Thyroid gland (tissue), 4 donors: ENCODE measurements at regions of chr11 and their contacts with region 1.

Region 1: DNA sequence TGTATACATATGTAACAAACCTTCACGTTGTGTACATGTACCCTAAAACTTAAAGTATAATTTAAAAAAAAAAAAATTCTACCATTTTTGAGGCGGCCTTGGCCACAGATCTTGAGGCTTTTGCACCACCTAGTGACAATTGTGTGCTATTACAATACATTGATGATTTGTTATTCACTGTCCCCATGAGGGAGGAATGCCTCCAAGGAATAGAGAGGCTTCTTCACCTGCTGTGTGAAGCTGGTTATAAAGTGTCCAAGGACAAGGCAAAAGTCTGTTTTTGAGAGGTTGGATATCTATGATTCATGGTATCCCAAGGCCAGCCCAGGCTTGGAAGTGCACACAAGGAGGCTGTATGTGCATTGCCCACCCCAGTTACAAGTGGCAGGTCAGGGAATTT is 30.7 kb downstream of the SLC22A25 start:
- DNase-seq: no peak
- H3K4me3 ChIP-seq: no peak overlapping the region
- H3K27ac ChIP-seq: no peak overlapping the region
- H3K4me1 ChIP-seq: no peaks in the 10 kb centered on the region
- H3K27me3 ChIP-seq: no peaks in the 10 kb centered on the region
- CTCF ChIP-seq: peak in 5 of 6 experiments; percentile 9 to 55 (median 45)
- POLR2A ChIP-seq: no peak

Region 2: DNA sequence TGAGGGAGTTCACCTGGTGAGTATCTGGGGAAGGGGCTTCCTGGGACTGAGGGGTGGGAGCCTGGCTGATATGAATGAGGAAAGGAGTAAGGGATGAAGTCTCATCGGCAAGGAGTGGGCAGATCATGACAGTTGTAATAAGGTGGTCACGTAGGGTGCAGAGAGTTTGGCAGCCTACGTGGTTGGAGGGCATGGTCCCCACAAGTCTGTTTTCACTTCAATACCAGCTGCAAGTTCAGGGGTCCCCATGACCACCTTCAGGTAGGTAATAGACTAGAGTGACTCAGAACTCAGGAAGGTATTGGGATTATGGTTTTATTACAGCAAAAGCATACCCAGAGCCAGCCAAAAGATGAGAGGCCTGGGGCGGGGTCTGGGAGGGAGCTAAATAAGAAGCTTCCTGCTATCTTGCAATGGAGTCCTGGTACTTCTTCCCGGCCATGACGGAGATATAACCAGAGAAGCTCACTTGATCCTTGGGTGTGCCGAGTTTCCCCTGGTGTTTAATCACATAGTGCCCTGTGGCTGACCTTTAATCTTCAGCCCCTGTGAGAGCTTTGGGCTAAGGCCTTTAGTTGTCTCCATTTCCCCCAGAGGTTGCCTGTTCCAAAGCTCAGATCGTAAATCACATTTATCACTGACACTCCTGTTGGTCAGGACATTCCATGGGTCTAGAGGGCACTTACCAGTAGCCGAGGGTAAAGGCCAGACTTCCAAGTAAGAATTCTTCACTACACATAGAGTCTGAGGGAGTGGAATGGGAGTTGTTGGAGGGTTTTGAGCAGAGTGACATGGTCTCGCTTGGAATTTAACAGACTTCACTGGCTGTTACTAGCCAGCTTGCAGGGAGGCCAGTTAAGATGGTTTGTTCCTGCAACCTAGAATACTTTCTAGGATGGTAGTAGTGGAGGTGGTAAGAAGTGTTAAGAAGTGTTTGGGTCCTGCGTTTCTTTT is 323.0 kb before region 1 on chr11:
- intact Hi-C with region 1: no loop called
- DNase-seq: no peak
- H3K4me3 ChIP-seq: no peak overlapping the region
- H3K27ac ChIP-seq: peak overlapping the region in 1 of 3 donors; percentile 17
- H3K4me1 ChIP-seq: peaks cover 0 to 17% of the 10 kb centered on the region in 2 donors
- H3K27me3 ChIP-seq: no peaks in the 10 kb centered on the region
- CTCF ChIP-seq: no peak
- POLR2A ChIP-seq: no peak

Region 3: DNA sequence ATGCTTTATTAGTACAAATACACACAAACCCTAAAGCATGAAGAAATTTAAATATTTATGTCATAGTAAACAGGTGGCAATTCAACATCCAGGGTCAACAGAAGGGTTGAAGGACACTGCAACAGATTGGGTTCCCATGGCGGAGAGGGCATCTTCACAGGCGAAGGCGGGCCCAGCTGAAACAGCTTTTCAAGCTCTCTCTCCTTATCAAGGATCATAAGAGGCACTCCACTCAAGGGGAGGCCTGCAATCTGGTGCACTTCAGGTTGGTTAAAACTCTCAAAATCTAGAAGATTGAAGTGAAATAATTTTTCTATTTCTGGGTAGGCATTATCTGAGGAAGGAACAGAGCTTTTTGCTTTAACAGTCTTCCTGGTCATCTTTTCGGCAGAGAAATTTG is 180.3 kb before region 1 on chr11:
- intact Hi-C with region 1: loop called (anchors 10 kb)
- DNase-seq: no peak
- H3K4me3 ChIP-seq: no peak overlapping the region
- H3K27ac ChIP-seq: no peak overlapping the region
- H3K4me1 ChIP-seq: no peaks in the 10 kb centered on the region
- H3K27me3 ChIP-seq: no peaks in the 10 kb centered on the region
- CTCF ChIP-seq: no peak
- POLR2A ChIP-seq: no peak

Region 4: DNA sequence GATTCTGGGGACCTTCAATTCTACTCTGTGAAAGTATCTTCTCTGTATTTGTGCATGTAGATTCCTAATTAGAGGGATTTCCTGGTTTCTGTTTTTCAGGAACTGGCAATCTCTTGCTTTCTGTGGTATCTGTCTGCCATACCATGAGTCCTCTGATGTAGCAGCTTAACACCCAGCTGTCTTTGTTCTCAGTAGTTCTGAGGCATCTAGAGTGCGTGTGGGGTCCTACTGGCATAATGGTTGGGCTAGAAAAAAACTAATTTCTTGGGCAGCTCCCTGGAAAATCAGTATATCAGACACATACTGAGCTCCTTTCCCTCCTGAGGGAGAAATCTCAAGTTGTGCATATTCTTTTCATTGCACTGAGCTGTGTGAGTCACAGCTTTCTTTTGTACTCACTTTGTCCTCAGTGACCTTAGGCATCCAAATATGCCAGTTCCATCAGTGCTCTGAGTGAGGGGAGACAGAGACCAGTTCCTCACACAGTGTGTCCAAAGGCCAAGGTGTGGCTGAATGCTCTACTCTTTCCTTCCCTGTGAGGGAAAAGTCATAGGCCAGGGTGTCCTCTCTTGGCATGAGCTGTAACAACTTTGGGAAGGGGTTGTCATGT is 33.2 kb before region 1 on chr11:
- intact Hi-C with region 1: no loop called
- DNase-seq: no peak
- H3K4me3 ChIP-seq: no peak overlapping the region
- H3K27ac ChIP-seq: no peak overlapping the region
- H3K4me1 ChIP-seq: no peaks in the 10 kb centered on the region
- H3K27me3 ChIP-seq: no peaks in the 10 kb centered on the region
- CTCF ChIP-seq: no peak
- POLR2A ChIP-seq: no peak

Region 5: DNA sequence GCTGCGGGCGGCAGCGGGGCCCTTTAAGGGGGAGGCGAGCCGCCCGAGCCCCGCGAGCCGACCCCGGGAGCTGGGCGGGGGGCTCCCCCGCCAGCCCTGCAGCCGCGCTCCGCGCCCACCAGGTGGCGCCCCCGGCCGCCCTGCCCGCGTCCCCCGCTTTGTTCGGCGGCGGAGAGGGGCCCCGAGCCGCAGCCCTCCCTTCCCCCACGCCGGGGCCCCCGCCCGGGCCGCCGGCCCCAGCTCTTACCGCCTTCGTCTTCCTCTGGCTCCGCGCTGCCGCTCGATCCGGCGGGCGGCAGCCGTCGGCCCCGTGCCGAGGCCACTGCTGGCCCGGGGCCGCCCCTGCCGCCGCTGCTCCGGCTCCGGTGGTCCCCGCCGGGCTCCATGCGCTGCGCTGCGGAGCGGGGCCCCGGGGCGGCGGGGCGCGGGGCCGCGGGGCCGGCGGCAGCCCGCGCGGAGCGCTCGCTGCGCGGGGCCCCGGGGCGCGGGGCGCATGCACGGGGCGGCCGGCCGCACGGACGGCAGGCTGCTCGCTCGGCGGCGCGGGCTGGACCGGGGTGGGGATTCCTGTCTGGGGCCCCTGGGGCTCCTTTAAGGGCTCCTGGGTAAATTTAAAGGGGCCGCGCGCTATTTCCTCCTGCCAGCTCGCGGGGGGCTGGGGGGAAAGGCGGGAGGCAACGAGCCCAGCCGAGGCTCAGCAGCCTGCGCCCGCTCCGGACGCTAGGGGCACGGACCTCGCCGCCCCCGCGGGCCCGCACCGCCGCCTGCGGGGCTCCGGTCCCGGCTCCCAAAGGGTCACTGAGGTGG is 555.7 kb after region 1 on chr11 and contains the start of gene ZFTA:
- intact Hi-C with region 1: no loop called
- DNase-seq: peak; percentile 70 to 72
- H3K4me3 ChIP-seq: peak within 1 kb of the TSS; percentile 53 to 87 (median 81)
- H3K27ac ChIP-seq: peak within 1 kb of the TSS; percentile 82 to 92 (median 83)
- H3K4me1 ChIP-seq: peaks cover 23 to 40% of the 10 kb centered on the region in 2 donors
- H3K27me3 ChIP-seq: no peaks in the 10 kb centered on the region
- CTCF ChIP-seq: peak in 4 of 6 experiments; percentile 45 to 99 (median 88)
- POLR2A ChIP-seq: no peak
- total RNA-seq, gene ZFTA: 14.7 to 29.7 (median 18.6) TPM